ENCODE measurements at regions of chr1 and their contacts with region 1.

Region 1: DNA sequence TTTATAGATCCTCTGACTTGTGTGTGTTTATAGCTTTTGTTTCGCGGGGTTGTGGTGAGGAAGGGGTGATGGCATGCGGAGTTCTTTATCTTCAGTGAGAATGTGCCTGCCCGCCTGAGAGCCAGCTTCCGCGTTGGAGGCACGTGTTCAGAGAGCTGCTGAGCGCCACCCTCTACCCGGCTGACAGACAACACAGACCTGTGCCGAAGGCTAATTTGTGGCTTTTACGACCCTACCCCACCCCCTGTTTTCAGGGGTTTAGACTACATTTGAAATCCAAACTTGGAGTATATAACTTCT is 14.4 kb upstream of the CD101 start:
- DNase-seq: no peak
- H3K4me3 ChIP-seq: no peak overlapping the region
- H3K27ac ChIP-seq: peak overlapping the region in 3 of 4 donors; percentile 30 to 84 (median 69)
- H3K4me1 ChIP-seq: peaks cover 0 to 78% (median 58%) of the 10 kb centered on the region in 4 donors
- H3K27me3 ChIP-seq: no peaks in the 10 kb centered on the region
- CTCF ChIP-seq: no peak
- EP300 ChIP-seq: no peak
- POLR2A ChIP-seq: no peak

Region 2: GRCh38 chr1:116570358-116571200 is 416.6 kb before region 1 on chr1 and contains the start of gene CD58:
- intact Hi-C with region 1: loop called (anchors 5 kb)
- DNase-seq: peak; percentile 93
- H3K4me3 ChIP-seq: peak within 1 kb of the TSS; percentile 73 to 95 (median 79)
- H3K27ac ChIP-seq: peak within 1 kb of the TSS; percentile 95 to 99 (median 96)
- H3K4me1 ChIP-seq: peaks cover 0 to 32% (median 21%) of the 10 kb centered on the region in 4 donors
- H3K27me3 ChIP-seq: no peaks in the 10 kb centered on the region
- CTCF ChIP-seq: peak in 3 of 4 experiments; percentile 50 to 71 (median 53)
- EP300 ChIP-seq: no peak
- POLR2A ChIP-seq: peak; percentile 26 to 58
- total RNA-seq, gene CD58: 17.5 to 36.6 (median 28.0) TPM

Region 3: DNA sequence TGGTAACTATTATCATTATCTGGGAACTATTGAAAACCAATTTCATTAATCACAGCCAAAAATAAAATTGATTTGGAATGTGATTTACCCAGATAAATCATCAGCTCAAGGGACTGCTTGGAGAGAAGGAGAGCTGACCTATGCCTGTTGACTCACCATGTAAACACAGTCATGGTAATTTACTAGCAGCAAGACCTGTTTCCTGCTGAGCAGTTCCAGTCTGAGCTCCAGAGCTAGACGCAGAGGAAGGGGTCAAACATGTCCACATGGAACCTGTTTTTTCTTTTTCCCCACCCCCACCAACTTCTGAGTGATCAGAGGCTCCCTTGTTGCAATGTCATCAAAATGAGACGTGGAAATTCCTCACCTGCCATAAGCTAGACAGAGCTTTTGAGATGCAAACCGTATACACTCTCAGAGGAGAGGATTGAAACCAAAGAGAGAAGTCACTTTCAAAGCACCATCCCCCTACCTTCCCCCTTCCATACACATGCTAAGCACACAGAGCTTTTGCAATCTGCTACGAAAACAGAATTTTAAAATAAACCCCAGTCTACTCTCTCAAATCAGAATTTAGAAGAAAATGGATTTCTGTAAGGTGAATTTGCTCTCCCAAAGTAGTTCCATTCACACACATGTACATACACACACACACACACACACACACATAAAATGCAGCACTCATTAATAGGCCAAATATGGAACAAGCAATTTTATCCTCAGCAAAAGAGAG is 133.4 kb before region 1 on chr1:
- intact Hi-C with region 1: loop called (anchors 5 kb)
- DNase-seq: no peak
- H3K4me3 ChIP-seq: no peak overlapping the region
- H3K27ac ChIP-seq: peak overlapping the region in 3 of 4 donors; percentile 34 to 46 (median 42)
- H3K4me1 ChIP-seq: peaks cover 2 to 36% (median 34%) of the 10 kb centered on the region in 4 donors
- H3K27me3 ChIP-seq: no peaks in the 10 kb centered on the region
- CTCF ChIP-seq: no peak
- EP300 ChIP-seq: no peak
- POLR2A ChIP-seq: no peak

Region 4: GRCh38 chr1:116951200-116951935 is 35.8 kb before region 1 on chr1:
- intact Hi-C with region 1: loop called (anchors 5 kb)
- DNase-seq: peak; percentile 85
- H3K4me3 ChIP-seq: peak overlapping the region in 3 of 4 donors; percentile 18 to 34 (median 24)
- H3K27ac ChIP-seq: peak overlapping the region; percentile 82 to 89 (median 86)
- H3K4me1 ChIP-seq: peaks cover 0 to 95% (median 65%) of the 10 kb centered on the region in 4 donors
- H3K27me3 ChIP-seq: no peaks in the 10 kb centered on the region
- CTCF ChIP-seq: no peak
- EP300 ChIP-seq: no peak
- POLR2A ChIP-seq: no peak

Region 5: DNA sequence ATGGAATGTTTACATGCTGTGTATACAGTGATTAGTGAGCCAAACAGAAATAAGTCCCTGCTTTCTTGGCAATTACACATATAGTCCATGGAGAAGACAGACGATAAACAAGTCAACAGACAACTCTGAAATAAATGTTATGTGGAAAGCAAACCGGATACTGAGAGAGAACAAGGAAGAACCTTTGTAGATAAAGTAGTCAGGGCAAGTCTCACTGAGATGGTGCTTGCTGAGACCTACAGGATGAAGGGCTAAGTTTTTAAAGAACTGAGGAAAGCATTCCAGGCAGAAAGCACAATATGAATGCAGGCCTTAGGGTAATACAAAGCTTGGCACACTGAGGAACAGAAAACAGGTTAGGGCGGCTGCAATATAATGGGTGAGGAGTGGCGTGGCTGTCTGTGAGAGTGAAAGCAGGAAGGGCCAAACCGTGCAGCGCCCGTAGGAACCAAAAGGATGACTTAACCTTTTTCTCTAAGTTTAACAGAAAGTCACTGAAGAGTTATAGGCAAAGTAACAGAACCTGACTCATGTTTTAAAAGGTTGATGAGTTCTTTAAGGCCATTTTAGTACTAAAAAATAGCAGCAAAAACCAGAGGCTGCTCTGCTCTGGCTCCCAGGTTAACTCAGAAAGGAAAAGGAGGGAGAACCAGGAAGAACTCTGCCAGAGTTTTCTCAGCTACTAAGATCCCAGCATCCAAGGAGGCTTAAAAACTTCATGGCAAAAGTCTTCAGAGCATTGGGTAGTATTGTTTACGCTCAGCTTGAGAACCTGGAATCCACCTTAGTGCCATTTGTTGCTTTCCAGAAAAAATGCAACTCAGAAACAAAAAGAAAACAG is 64.2 kb after region 1 on chr1:
- intact Hi-C with region 1: loop called (anchors 5 kb)
- DNase-seq: no peak
- H3K4me3 ChIP-seq: peak overlapping the region in 3 of 4 donors; percentile 12 to 29 (median 14)
- H3K27ac ChIP-seq: peak overlapping the region; percentile 1 to 58 (median 40)
- H3K4me1 ChIP-seq: peaks cover 0 to 12% (median 7%) of the 10 kb centered on the region in 4 donors
- H3K27me3 ChIP-seq: no peaks in the 10 kb centered on the region
- CTCF ChIP-seq: no peak
- EP300 ChIP-seq: no peak
- POLR2A ChIP-seq: no peak

Region 6: GRCh38 chr1:117301901-117302300 is 314.7 kb after region 1 on chr1:
- intact Hi-C with region 1: no loop called
- DNase-seq: no peak
- H3K4me3 ChIP-seq: no peak overlapping the region
- H3K27ac ChIP-seq: no peak overlapping the region
- H3K4me1 ChIP-seq: no peaks in the 10 kb centered on the region
- H3K27me3 ChIP-seq: no peaks in the 10 kb centered on the region
- CTCF ChIP-seq: no peak
- EP300 ChIP-seq: no peak
- POLR2A ChIP-seq: no peak

Region 7: DNA sequence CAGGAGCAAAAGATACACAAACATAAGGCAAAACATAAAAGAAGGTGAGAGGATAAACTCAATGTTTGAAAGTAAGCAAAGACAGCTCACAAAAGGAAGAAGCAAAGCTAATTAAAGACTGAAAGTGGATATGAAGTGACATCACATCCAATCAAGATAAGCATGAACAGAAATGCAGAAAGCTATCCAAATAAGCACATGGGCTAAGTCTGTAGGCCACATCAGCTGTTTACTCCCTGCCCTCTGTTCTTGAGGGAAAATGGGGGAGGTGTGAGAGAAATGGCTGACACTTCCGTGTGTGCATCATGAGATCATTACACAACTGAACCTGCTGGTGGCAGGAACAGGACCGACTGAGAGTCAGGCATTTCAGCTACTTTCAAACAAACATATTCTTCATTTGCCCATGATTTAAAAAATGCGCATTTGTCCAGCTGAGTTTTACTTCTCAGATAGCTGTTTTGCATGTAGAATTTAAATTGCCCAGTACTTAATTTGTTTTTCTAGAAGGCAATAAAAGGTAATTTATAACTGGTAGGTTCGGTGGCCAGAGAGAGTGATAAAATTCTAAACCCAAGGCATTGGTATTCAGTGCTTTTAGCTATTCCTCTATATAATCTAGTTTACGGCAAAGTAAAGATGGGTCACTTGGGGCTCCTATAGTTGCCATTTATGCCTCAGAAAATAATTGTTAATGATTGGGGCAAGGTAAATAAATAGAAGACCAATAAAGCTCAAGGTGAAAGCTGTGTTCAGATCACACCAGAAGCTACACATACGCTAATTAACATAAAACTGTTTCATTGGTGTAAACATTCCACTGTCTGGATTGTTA is 352.9 kb after region 1 on chr1:
- intact Hi-C with region 1: no loop called
- DNase-seq: no peak
- H3K4me3 ChIP-seq: no peak overlapping the region
- H3K27ac ChIP-seq: no peak overlapping the region
- H3K4me1 ChIP-seq: no peaks in the 10 kb centered on the region
- H3K27me3 ChIP-seq: no peaks in the 10 kb centered on the region
- CTCF ChIP-seq: no peak
- EP300 ChIP-seq: no peak
- POLR2A ChIP-seq: no peak